ENCODE measurements at regions of chr9 and their contacts with region 1.

Region 1: GRCh38 chr9:34332076-34332964 is 3.0 kb downstream of the NUDT2 start:
- DNase-seq: peak in 1 of 3 donors; percentile 49
- ATAC-seq: no peak
- H3K4me3 ChIP-seq: no peak overlapping the region
- H3K4me1 ChIP-seq: peaks cover 20% of the 10 kb centered on the region
- CTCF ChIP-seq: no peak

Region 2: GRCh38 chr9:34379334-34380033 is 47.2 kb after region 1 on chr9:
- intact Hi-C with region 1: loop called (anchors 2 kb)
- DNase-seq: peak; percentile 93 to 96 (median 94)
- ATAC-seq: peak; percentile 59
- H3K4me3 ChIP-seq: no peak overlapping the region
- H3K4me1 ChIP-seq: peaks cover 27% of the 10 kb centered on the region
- CTCF ChIP-seq: peak; percentile 99

Region 3: DNA sequence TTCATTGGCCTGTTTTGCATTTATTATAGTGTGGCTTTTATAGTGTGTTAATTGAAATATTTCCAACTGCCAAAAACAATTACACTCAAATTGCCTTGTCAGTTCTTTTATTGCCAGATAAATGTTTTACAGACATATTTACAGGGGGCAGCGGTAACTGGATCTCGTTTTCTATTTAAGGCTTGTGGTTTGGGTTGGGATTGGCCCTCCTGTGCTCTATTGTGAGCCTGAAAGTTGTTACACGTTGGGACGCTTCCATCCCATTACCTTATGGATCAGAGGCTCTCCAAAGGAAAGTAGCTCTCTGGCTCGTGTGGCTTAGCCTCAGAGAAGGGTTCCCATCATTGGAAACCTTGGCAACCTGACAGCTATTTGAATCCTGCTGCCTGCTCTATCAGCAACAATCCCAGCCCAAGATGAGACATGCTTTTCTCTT is 147.1 kb after region 1 on chr9:
- intact Hi-C with region 1: no loop called
- DNase-seq: peak in 1 of 3 donors; percentile 19
- ATAC-seq: peak; percentile 47
- H3K4me3 ChIP-seq: no peak overlapping the region
- H3K4me1 ChIP-seq: peaks cover 14% of the 10 kb centered on the region
- CTCF ChIP-seq: no peak

Measured in mucosa of descending colon (tissue), 3 donors.